HAP-1 (cell line): ENCODE measurements at regions of chr2 and their contacts with region 1.

Region 1: GRCh38 chr2:54522624-54523281 is 66.6 kb downstream of the SPTBN1 start:
- DNase-seq: peak; percentile 59 to 70
- H3K4me3 ChIP-seq: no peak overlapping the region
- H3K4me1 ChIP-seq: peaks cover 9% of the 10 kb centered on the region
- H3K27me3 ChIP-seq: no peaks in the 10 kb centered on the region

Region 2: DNA sequence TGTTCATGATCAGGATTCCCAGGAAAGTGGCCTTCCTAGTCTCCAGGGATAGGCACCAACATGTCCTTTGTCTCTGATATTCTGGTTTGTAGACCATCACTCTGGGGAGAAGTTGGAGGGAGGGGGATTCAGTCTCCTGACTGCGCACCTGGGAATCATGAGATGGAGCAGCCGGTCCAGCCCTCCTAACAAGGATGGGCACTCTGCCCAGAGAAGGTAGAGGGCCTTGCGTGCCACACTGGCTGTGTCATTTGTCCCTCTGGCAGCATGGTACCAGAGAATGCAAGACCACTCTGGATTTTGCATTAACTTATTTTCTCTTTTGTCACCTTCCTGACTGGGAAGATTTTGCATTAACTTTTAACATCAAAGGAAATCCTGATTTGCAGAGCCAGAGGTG is 125.5 kb after region 1 on chr2:
- in situ Hi-C with region 1: loop called (anchors 5 kb)
- DNase-seq: no peak
- H3K4me3 ChIP-seq: no peak overlapping the region
- H3K4me1 ChIP-seq: no peaks in the 10 kb centered on the region
- H3K27me3 ChIP-seq: no peaks in the 10 kb centered on the region

Region 3: DNA sequence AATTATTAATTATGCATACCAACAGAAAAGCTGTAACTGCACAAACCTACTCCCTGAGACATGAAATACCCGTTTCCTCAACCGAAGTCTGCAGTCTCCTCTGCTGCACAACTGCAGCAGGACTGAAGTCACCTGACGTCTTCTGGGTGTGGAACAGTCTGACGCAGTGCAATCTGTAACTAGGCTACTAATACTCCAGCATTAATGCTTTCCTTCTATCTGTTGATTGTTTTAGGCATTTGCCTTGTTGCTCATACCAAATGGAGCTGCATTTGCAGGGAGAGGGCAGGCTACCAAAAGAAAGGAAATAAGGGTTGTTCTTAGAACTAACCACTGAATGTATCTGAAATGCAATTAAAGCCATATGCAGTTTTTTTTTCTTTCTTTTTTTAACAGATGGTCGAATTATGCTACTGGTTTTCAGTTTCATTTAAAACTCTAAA is 487.4 kb after region 1 on chr2:
- in situ Hi-C with region 1: no loop called
- DNase-seq: peak; percentile 57 to 58
- H3K4me3 ChIP-seq: peak overlapping the region; percentile 19
- H3K4me1 ChIP-seq: peaks cover 61% of the 10 kb centered on the region
- H3K27me3 ChIP-seq: no peaks in the 10 kb centered on the region